ENCODE measurements at regions of chr20 and their contacts with region 1.

Region 1: GRCh38 chr20:45987108-45987780 is 15.2 kb upstream of the ZNF335 start:
- DNase-seq: no peak
- H3K4me3 ChIP-seq: no peak overlapping the region
- CTCF ChIP-seq: peak; percentile 93

Region 2: GRCh38 chr20:45362804-45363610 is 624.2 kb before region 1 on chr20 and contains the start of gene SYS1:
- CTCF ChIA-PET with region 1: no interaction called
- POLR2A ChIA-PET with region 1: no interaction called
- DNase-seq: peak; percentile 90
- H3K4me3 ChIP-seq: peak within 1 kb of the TSS; percentile 96
- CTCF ChIP-seq: peak; percentile 87

Region 3: DNA sequence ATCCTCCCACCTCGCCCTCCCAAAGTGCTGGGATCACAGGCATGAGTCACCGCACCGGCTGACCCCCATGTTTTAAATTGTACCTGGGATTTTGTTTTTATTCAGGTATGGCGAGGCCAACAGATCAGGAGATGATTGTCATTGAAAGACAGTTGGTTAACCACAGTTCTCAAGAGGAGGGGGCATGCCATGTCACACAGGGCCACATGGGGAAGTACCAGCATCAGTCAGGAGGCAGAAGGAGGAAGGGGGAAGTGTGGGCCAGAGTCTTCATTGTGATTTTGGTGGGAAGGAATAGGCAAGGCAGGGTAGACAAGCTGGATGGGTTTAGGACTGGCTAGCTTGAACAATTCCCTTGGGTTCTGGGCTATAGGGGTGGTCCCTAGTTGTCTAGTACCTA is 11.5 kb after region 1 on chr20:
- CTCF ChIA-PET with region 1: interaction called, 18 read pairs
- POLR2A ChIA-PET with region 1: no interaction called
- DNase-seq: no peak
- H3K4me3 ChIP-seq: no peak overlapping the region
- CTCF ChIP-seq: no peak

Region 4: GRCh38 chr20:46004889-46005473 is 17.7 kb after region 1 on chr20:
- CTCF ChIA-PET with region 1: interaction called, 18 read pairs
- POLR2A ChIA-PET with region 1: no interaction called
- DNase-seq: no peak
- H3K4me3 ChIP-seq: no peak overlapping the region
- CTCF ChIP-seq: no peak

Region 5: GRCh38 chr20:46174469-46175128 is 187.4 kb after region 1 on chr20:
- CTCF ChIA-PET with region 1: interaction called, 10 read pairs
- POLR2A ChIA-PET with region 1: no interaction called
- DNase-seq: no peak
- H3K4me3 ChIP-seq: no peak overlapping the region
- CTCF ChIP-seq: peak; percentile 79

Region 6: GRCh38 chr20:46316984-46317684 is 329.9 kb after region 1 on chr20:
- CTCF ChIA-PET with region 1: no interaction called
- POLR2A ChIA-PET with region 1: no interaction called
- DNase-seq: no peak
- H3K4me3 ChIP-seq: no peak overlapping the region
- CTCF ChIP-seq: no peak

Measured in AG04449 (cell line).